GM23248 (cell line): ENCODE measurements at regions of chr17 and their contacts with region 1.

Region 1: DNA sequence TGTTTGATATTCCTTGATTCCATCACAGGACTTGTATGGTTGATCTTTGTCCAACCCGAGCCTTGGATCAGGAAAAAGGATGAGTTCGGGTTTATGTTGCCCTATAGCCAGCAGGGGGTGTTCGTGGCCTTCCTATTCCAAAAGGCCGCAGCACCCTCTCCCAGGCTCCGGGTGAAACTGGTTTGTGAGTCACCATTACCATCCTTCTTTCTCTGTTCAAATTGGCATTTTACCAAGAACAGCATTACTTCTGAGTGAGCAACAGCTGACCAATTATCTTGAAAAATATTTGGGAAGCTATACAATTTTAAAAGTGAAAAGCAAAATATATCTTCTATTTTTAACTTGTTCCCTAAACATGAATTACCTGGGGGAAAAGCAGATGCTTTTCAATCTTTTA is 24.3 kb upstream of the KRT20 start:
- DNase-seq: peak; percentile 98
- H3K4me3 ChIP-seq: no peak overlapping the region
- H3K27ac ChIP-seq: peak overlapping the region; percentile 90
- H3K4me1 ChIP-seq: peaks cover 37% of the 10 kb centered on the region
- H3K27me3 ChIP-seq: no peaks in the 10 kb centered on the region

Region 2: GRCh38 chr17:40647624-40648383 is 261.5 kb before region 1 on chr17 and contains the start of gene SMARCE1:
- in situ Hi-C with region 1: no loop called
- DNase-seq: peak; percentile 86
- H3K4me3 ChIP-seq: peak within 1 kb of the TSS; percentile 95
- H3K27ac ChIP-seq: peak within 1 kb of the TSS; percentile 98
- H3K4me1 ChIP-seq: peaks cover 28% of the 10 kb centered on the region
- H3K27me3 ChIP-seq: no peaks in the 10 kb centered on the region
- total RNA-seq, gene SMARCE1: 67.4 and 75.8 TPM in 2 replicates

Region 3: GRCh38 chr17:40818733-40819527 is 90.4 kb before region 1 on chr17:
- in situ Hi-C with region 1: loop called (anchors 10 kb)
- DNase-seq: peak; percentile 95
- H3K4me3 ChIP-seq: peak overlapping the region; percentile 95
- H3K27ac ChIP-seq: peak overlapping the region; percentile 84
- H3K4me1 ChIP-seq: peaks cover 26% of the 10 kb centered on the region
- H3K27me3 ChIP-seq: no peaks in the 10 kb centered on the region

Region 4: DNA sequence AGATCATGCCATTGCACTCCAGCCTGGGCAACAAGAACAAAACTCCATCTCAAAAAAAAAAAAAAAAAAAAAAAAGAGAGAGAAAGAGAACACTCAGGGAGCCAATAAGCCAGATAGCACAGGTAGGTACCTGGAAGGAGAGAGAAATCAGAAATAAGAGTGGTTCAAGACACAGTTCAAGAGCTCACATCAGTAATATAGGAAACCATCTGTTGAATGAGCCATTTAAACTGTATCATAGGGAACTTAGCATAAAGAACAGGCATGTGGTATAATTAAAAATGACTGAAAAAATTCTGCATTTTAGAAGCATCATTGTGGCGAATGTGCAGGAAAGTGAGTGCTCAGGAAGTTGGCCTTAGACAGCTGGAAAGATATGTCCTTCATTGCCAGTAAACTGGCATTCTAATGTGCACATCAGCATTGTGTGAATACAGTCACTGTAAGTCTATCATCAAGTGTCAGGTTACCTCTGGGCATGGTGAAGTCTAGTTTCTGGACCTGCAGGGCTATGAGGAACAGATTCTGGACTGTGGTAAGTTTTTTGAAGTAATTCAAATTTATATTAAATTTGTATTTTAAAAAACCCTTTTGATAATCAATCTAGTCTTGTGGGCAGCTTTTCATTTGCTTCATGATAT is 62.7 kb before region 1 on chr17:
- in situ Hi-C with region 1: no loop called
- DNase-seq: peak; percentile 2
- H3K4me3 ChIP-seq: no peak overlapping the region
- H3K27ac ChIP-seq: no peak overlapping the region
- H3K4me1 ChIP-seq: peaks cover 10% of the 10 kb centered on the region; the same call in 1 of the 2 replicates
- H3K27me3 ChIP-seq: no peaks in the 10 kb centered on the region

Region 5: DNA sequence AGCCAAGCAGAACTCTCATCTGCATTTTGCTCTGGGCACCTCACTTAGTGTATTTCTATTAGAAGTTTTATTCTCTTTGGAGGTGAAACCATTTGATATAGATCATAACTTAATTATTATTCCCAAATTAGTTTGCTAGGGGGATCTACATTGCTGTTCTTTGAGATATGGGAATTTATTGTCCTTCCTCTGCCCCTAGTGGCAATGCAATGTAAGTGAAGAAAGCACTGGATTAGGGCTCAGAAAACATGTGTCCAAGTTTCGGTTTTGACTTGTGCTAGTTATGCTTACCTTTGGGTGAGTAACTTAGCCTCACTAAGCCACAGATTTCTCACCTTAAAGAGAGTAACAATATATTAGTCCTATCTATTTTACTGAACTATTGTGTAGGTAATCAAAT is 54.5 kb after region 1 on chr17:
- in situ Hi-C with region 1: no loop called
- DNase-seq: peak; percentile 45
- H3K4me3 ChIP-seq: no peak overlapping the region
- H3K27ac ChIP-seq: no peak overlapping the region
- H3K4me1 ChIP-seq: peaks cover 9% of the 10 kb centered on the region
- H3K27me3 ChIP-seq: no peaks in the 10 kb centered on the region

Region 6: GRCh38 chr17:41322094-41322902 is 412.9 kb after region 1 on chr17:
- in situ Hi-C with region 1: loop called (anchors 10 kb)
- DNase-seq: peak; percentile 82
- H3K4me3 ChIP-seq: no peak overlapping the region
- H3K27ac ChIP-seq: no peak overlapping the region
- H3K4me1 ChIP-seq: peaks cover 9% of the 10 kb centered on the region
- H3K27me3 ChIP-seq: no peaks in the 10 kb centered on the region